WTC11 (cell line): ENCODE measurements at regions of chr19 and their contacts with region 1.

Region 1: DNA sequence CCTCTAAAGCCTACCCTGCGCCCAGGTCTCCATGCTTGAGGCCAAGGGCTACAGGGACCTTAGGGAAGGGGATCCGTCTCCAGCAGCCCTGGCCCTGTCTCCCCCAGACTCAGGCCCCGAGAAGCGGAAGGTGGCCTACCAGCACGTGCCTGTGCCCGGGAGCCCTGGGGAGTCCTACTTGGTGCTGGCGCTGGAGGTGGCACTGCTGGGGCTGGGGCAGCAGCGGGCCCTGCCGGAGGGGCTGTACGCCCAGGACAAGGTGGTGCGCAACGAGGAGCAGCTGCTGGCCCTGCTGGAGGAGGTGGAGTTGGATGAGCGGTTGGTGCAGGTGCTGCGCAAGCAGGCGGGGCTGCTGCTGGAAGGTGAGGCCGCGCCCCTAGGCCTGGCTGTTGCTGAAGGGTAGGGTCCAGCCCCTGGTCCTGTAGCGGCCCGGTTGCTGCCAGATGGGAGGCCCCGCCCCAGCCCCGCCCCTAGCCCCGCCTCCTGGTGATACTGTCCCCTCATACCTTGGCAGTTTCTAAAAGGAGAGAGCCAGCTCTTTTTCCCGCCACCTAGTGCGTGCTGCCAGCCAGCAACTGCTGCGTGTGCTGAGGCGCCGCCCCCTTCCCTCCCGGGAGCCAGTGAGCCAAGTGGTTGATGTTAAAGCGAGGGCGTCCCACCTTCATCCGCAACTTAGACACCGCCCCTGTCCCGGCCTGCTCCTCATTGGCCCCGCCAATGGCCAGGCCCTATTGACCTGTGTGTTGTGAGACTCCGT is 22.6 kb downstream of the ZSWIM4 start:
- DNase-seq: peak; percentile 97
- ATAC-seq: peak; percentile 78
- H3K4me3 Mint-ChIP-seq: peak overlapping the region; percentile 73
- H3K27ac Mint-ChIP-seq: peak overlapping the region; percentile 98
- H3K4me1 Mint-ChIP-seq: 0 out of 2 replicates have a peak, but pooled peaks cover 3% of the 10 kb centered on the region
- H3K27me3 Mint-ChIP-seq: no peaks in the 10 kb centered on the region
- CTCF ChIP-seq: no peak

Region 2: GRCh38 chr19:13794757-13795589 is 22.8 kb before region 1 on chr19 and contains the start of gene ZSWIM4:
- CTCF ChIA-PET with region 1: interaction called, 7 read pairs
- POLR2A ChIA-PET with region 1: interaction called, 19 read pairs
- DNase-seq: peak; percentile 100
- ATAC-seq: peak; percentile 91
- H3K4me3 Mint-ChIP-seq: peak within 1 kb of the TSS; percentile 92
- H3K27ac Mint-ChIP-seq: peak within 1 kb of the TSS; percentile 98
- H3K4me1 Mint-ChIP-seq: peaks cover 16% of the 10 kb centered on the region
- H3K27me3 Mint-ChIP-seq: no peaks in the 10 kb centered on the region
- CTCF ChIP-seq: no peak
- total RNA-seq, gene ZSWIM4: 33.4 to 35.5 TPM (median 34.2 TPM) in 3 replicates